ENCODE measurements at regions of chr7 and their contacts with region 1.

Region 1: DNA sequence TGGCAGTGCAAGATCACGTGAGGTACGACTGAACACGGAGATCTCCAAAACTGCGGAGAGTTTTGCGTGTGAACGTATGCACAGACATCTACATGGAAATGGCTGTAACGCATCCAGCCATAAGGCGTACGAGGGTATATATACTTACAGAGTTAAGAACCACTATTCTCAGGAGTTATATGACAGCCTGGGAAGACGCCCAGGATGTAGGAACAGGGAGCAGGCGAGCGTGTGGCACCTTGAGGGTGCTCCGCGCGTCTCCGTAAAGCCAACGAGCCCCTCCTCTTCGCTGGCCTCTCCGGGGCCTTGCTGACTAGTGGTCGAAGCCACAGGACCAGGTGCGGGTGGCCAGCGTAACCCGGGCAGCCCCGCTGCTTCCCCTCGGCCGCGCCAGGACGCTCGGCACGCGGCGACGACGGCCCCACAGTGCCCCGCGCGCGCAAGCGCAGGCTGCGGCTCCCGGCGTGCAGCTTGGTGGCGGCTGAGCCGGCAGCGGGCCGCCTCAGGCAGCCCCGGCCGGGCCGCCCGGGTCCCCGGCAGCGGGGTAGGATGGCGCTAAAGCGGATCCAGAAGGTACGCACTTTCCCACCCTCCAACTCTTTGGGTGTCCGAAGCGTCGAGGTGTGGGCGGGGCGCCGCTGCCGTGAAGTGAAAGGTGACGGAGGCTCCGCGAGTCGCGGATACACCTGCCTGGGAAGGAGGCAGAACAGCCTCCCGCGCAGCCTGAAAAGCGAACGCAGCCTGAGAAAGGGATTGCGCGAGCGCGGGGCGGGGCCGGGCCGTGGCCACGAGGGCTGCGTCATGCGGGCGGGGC is at the start of gene UBE2D4:
- DNase-seq: peak; percentile 97
- H3K4me3 Mint-ChIP-seq: peak within 1 kb of the TSS; percentile 98
- H3K27ac Mint-ChIP-seq: peak within 1 kb of the TSS; percentile 95
- H3K4me1 Mint-ChIP-seq: peaks cover 25% of the 10 kb centered on the region
- H3K27me3 Mint-ChIP-seq: no peaks in the 10 kb centered on the region
- total RNA-seq, gene UBE2D4: 16.0 and 17.2 TPM in 2 replicates

Region 2: DNA sequence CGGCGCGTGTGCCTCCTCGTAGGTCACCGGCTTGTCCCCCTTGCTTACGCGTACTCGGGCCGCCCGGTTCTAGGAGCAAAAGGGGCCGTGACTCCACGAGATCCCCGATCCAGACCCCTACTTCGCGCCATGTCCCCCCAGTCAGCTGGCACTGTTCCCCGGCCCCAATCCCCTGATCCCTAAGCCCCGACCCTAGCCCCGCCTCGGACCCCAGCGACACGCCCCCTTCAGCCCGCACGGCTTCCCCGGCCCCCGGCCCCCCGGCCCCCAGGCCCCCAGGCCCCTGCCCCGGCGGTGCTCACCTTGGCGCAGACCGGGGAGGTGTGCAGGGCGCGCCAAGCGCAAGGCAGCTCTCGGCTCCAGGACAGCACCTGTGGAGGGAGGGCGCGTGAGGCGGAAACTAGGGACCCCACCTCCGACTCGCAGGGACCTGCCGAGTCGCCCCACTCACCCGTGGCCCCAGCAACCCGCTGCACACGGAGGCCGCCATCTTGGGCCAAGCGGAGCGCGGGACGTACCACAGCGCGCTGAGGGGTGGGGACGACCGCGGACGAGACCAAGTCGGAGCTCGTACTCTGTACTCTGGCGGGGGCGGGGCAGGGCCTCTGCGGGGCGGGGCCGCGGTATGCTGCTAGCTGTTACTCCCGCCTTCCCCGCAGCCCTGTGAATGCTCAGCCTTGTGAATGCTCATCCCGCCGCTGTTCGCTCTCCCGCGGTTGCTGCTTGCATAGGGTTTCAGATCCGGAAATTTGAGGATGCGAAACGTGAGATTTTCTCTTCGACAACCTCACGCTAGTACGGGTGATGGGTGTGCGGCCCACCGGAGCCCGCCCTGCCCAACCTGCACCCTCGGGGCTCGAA is 57.0 kb before region 1 on chr7 and contains the start of gene MRPS24:
- intact Hi-C with region 1: loop called (anchors 1 kb)
- DNase-seq: peak; percentile 98
- H3K4me3 Mint-ChIP-seq: peak within 1 kb of the TSS; percentile 95
- H3K27ac Mint-ChIP-seq: peak within 1 kb of the TSS; percentile 84
- H3K4me1 Mint-ChIP-seq: peaks cover 18% of the 10 kb centered on the region
- H3K27me3 Mint-ChIP-seq: no peaks in the 10 kb centered on the region
- total RNA-seq, gene MRPS24: 119 and 123 TPM in 2 replicates

Region 3: DNA sequence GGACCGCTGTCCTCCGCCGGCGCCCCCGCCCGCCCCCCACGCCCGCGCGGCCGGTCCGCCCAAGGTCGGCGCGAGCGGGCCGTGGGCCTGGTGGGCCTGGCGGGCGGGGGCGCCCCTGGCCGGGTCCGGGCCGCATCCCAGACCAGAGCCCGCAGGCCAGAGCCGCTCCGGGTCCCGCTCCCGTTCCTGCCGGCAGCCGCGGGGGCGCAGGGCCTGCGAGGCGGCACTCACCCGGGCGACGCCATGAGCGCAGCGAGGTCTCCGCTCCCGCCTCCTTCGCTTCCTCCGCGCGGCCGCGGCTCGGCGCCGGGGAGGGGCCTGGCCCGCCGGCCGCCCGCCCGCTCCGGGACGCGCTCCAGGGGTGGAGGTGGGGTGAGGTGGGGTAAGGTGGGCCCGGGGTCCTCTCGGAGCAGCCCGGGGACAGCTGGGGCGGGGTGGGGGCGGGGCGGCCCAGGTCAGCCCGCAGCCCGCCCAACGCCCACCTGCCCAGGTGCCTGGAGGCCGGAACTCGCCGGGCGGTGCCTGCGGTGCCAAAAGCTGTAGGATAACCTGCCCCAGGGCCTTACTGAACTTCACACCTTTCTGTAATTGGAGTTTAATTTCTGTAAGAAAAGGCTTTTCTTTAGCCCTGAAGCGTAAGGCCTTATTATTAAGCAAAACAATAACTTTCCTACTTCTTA is 19.7 kb before region 1 on chr7 and contains the start of gene URGCP:
- intact Hi-C with region 1: loop called (anchors 1 kb)
- DNase-seq: peak; percentile 89
- H3K4me3 Mint-ChIP-seq: peak within 1 kb of the TSS; percentile 92
- H3K27ac Mint-ChIP-seq: peak within 1 kb of the TSS; percentile 94
- H3K4me1 Mint-ChIP-seq: peaks cover 29% of the 10 kb centered on the region
- H3K27me3 Mint-ChIP-seq: no peaks in the 10 kb centered on the region
- total RNA-seq, gene URGCP: 33.2 and 33.4 TPM in 2 replicates

Region 4: DNA sequence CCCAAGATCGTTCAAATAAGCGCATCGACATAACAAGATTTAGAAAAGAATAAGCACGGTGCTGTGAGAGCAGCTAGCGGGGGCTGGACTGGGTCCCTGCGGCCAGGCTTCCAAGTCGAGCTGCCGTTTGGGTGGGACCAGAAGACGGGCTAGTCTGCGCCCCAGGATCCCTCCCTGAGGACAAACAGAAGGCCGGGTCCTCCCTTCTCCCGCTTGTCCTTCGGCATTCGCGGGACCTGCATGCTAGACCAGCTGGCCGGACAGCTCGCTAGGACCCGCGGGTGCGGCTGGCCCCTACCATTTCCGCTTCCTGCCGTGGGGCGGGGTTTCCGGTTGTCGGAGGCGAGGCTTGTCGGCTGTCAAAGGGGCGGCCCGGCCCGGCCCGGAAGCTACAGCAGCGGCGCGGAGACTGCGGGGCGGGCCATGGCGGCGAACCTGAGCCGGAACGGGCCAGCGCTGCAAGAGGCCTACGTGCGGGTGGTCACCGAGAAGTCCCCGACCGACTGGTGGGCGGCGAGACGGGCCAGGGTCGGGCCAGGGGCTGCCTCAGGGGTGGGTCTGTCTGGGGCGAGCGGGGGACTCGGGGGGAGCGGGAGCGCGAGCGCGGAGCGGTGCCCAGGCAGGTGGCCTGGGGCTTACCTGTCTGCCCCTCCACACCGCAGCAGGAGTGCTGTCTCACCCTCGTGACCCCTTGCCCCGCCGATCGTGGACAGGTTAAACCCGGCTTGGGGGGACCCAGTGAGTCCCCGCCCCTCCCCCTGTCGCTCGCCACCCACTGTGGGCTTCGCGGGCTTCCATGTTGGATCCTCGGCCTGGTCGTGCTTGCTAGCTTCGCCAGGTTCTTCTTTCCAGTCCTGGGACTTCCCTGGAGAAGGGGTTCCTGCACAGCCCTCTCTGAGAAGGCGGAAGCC is 118.4 kb after region 1 on chr7 and contains the start of gene DBNL:
- intact Hi-C with region 1: no loop called
- DNase-seq: peak; percentile 99
- H3K4me3 Mint-ChIP-seq: peak within 1 kb of the TSS; percentile 91
- H3K27ac Mint-ChIP-seq: peak within 1 kb of the TSS; percentile 89
- H3K4me1 Mint-ChIP-seq: peaks cover 40% of the 10 kb centered on the region
- H3K27me3 Mint-ChIP-seq: no peaks in the 10 kb centered on the region
- total RNA-seq, gene DBNL: 127 and 131 TPM in 2 replicates